Left cardiac atrium (tissue), 4 donors: ENCODE measurements at regions of chrX and their contacts with region 1.

Region 1: GRCh38 chrX:88838392-88838791 is 91.4 kb downstream of the CPXCR1 start:
- DNase-seq: no peak
- ATAC-seq: no peak

Region 2: DNA sequence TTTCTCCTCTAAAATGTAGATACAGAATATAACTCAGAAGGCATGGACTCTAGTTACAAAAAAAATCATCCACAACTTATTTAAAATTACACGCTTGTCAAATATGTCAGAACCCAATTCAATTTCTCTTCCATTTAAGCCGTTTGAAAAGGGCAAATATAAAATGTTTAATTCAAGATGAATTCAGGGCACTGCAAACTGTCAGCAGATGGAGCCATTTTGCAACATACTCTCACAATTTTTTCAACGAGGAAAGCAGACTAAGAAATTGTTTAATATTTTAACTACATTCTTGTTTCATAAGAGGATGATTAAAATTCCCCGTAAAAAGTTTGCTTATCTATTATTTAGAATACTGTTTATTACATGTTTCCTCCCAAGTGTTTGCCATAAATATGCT is 412.7 kb before region 1 on chrX:
- intact Hi-C with region 1: no loop called
- DNase-seq: no peak
- ATAC-seq: no peak

Region 3: DNA sequence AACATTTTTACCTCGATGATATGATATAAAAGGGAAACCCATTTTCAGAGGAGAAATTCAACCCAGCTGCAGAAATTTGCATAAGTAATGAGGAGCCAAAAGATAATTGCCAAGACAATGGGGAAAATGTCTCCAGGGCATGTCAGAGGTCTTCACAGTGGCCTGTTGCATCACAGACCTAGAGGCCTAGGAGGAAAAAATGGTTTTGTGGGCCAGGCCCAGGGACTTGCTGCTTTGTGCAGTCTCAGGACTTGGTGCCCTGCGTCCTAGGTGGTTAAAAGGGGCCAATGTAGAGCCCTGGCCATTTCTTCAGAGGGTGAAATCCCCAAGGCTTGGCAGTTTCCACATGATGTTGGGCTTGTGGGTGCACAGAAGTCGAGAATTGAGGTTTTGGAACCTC is 15.5 kb after region 1 on chrX:
- intact Hi-C with region 1: loop called in 1 of 2 experiments (anchors 1 kb)
- DNase-seq: no peak
- ATAC-seq: no peak